AG04450 (cell line): ENCODE measurements at regions of chr21 and their contacts with region 1.

Region 1: DNA sequence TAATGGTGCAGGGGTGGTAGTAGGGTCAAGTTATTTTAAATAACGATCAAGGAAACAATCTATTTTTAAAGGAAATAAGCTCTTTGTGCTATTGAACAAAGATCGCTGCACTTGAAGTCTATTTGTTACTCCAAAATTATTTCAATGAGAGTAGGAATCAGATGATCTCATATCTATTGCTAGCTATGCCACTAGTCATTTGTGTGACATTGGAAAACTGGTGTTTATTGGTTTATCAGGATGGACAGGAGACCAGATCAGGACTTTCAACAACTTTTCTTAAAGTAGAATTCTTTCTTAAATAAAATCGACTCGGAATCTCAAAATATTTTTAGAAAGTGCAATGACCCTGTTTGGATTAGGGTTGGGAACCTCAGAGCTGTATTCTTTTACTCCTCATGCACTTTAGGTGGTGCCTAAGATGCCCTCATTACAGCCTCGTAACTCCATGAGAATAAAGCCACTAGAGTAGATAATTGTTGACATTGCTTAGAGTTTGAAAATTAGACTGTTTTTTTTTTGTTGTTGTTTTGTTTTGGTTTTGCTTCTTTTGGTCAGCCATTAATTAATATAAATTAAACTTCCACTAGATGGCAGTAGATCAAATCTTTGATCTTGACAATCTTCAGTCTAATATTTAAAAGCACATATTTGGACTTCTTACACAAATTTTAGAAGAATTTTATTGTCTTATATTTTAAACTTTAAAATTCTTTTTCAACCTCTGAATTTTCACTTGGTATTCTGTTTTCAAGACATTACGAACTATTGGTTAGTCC is 352.4 kb downstream of the USP25 start:
- DNase-seq: no peak
- H3K4me3 ChIP-seq: no peak overlapping the region
- H3K27ac ChIP-seq: no peak overlapping the region
- H3K27me3 ChIP-seq: no peaks in the 10 kb centered on the region
- CTCF ChIP-seq: peak; percentile 39

Region 2: DNA sequence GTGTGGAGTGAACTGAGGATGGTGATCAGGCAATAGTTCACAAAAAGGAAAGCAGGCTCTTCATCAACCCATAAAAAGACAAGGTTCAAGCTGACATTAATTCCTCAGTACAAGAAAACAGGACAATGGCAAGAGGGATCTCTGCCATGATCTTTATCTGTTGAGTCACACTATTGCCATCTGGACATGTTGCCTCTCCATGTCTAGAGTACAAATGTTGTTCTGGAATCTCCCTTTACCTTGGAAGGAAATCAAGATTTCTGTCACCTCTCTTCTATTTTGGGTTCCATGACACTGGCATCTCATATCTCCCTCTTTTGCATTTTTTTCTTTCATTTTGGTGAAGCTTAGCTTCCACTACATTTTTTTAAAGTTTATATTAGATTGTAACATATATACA is 23.3 kb before region 1 on chr21:
- CTCF ChIA-PET with region 1: no interaction called
- POLR2A ChIA-PET with region 1: no interaction called
- DNase-seq: no peak
- H3K4me3 ChIP-seq: no peak overlapping the region
- H3K27ac ChIP-seq: no peak overlapping the region
- H3K27me3 ChIP-seq: no peaks in the 10 kb centered on the region
- CTCF ChIP-seq: no peak

Region 3: GRCh38 chr21:16117851-16118592 is 35.8 kb after region 1 on chr21:
- CTCF ChIA-PET with region 1: interaction called, 10 read pairs
- POLR2A ChIA-PET with region 1: interaction called, 3 read pairs
- DNase-seq: peak; percentile 71
- H3K4me3 ChIP-seq: no peak overlapping the region
- H3K27ac ChIP-seq: no peak overlapping the region
- H3K27me3 ChIP-seq: no peaks in the 10 kb centered on the region
- CTCF ChIP-seq: no peak

Region 4: GRCh38 chr21:16330082-16330907 is 248.1 kb after region 1 on chr21:
- CTCF ChIA-PET with region 1: interaction called, 74 read pairs
- POLR2A ChIA-PET with region 1: no interaction called
- DNase-seq: peak; percentile 44
- H3K4me3 ChIP-seq: no peak overlapping the region
- H3K27ac ChIP-seq: no peak overlapping the region
- H3K27me3 ChIP-seq: no peaks in the 10 kb centered on the region
- CTCF ChIP-seq: peak; percentile 76

Region 5: DNA sequence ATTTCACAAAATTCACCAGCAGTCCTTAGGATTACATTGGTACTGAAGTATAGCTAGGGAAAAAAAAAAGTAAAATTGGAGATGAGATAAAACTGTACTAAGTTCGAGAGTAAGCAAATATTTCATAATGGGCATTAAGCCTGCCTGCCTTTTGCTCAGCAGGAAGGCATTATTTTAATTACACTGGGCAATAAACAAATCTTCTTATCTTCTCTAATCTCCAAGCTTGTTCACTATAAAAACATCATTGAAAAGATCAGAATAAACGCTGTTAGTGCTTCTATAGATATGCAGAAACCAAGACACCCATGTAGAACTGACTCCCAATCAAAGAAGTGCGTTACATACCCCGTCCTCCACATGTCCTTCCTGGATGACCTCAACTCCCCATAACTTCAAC is 1988.2 kb after region 1 on chr21:
- CTCF ChIA-PET with region 1: no interaction called
- POLR2A ChIA-PET with region 1: no interaction called
- DNase-seq: no peak
- H3K4me3 ChIP-seq: no peak overlapping the region
- H3K27ac ChIP-seq: no peak overlapping the region
- H3K27me3 ChIP-seq: no peaks in the 10 kb centered on the region
- CTCF ChIP-seq: no peak